ENCODE measurements at regions of chr7 and their contacts with region 1.

Region 1: GRCh38 chr7:44257618-44258422 is 57.0 kb downstream of the YKT6 start:
- DNase-seq: no peak
- H3K4me3 ChIP-seq: no peak overlapping the region
- H3K27ac ChIP-seq: no peak overlapping the region
- H3K4me1 ChIP-seq: no peaks in the 10 kb centered on the region
- H3K27me3 ChIP-seq: no peaks in the 10 kb centered on the region
- CTCF ChIP-seq: no peak
- EP300 ChIP-seq: no peak
- POLR2A ChIP-seq: no peak
- RAD21 ChIP-seq: no peak

Region 2: DNA sequence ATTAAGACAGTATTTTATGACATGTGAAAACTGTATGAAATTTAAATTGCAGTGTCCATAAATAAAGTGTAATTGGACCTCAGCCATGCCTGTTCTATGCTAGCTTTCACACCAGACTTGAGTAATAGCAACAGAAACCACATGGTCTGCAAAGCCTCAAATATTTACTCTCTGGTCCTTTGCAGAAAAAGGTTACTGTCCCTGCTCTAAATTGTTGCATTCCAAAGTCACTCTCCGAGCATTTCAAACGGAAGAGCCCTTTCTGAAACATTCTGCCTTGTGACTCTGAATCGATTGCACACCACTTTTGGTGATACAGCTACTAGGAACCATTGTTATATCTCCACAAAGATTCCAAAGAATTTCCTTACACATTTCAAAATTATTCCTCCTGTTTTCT is 756.0 kb before region 1 on chr7:
- CTCF ChIA-PET with region 1: no interaction called
- POLR2A ChIA-PET with region 1: no interaction called
- DNase-seq: no peak
- H3K4me3 ChIP-seq: no peak overlapping the region
- H3K27ac ChIP-seq: no peak overlapping the region
- H3K4me1 ChIP-seq: no peaks in the 10 kb centered on the region
- H3K27me3 ChIP-seq: no peaks in the 10 kb centered on the region
- CTCF ChIP-seq: no peak
- EP300 ChIP-seq: no peak
- POLR2A ChIP-seq: no peak
- RAD21 ChIP-seq: no peak

Region 3: GRCh38 chr7:44065436-44066118 is 192.2 kb before region 1 on chr7 and contains the start of gene PGAM2:
- CTCF ChIA-PET with region 1: no interaction called
- POLR2A ChIA-PET with region 1: no interaction called
- DNase-seq: peak in 1 of 2 experiments; percentile 65
- H3K4me3 ChIP-seq: peak within 1 kb of the TSS in 2 of 4 experiments; percentile 2 to 20; a peak in 1 of 8 replicates
- H3K27ac ChIP-seq: no peak within 1 kb of the TSS
- H3K4me1 ChIP-seq: peaks cover 9 to 30% (median 26%) of the 10 kb centered on the region in 4 experiments
- H3K27me3 ChIP-seq: peaks cover 0 to 3% (median 0%) of the 10 kb centered on the region in 4 experiments; a peak in 2 of 7 replicates
- CTCF ChIP-seq: no peak
- EP300 ChIP-seq: no peak
- POLR2A ChIP-seq: no peak
- RAD21 ChIP-seq: no peak
- total RNA-seq, gene PGAM2: 1.4 and 2.1 TPM in 2 replicates

Region 4: DNA sequence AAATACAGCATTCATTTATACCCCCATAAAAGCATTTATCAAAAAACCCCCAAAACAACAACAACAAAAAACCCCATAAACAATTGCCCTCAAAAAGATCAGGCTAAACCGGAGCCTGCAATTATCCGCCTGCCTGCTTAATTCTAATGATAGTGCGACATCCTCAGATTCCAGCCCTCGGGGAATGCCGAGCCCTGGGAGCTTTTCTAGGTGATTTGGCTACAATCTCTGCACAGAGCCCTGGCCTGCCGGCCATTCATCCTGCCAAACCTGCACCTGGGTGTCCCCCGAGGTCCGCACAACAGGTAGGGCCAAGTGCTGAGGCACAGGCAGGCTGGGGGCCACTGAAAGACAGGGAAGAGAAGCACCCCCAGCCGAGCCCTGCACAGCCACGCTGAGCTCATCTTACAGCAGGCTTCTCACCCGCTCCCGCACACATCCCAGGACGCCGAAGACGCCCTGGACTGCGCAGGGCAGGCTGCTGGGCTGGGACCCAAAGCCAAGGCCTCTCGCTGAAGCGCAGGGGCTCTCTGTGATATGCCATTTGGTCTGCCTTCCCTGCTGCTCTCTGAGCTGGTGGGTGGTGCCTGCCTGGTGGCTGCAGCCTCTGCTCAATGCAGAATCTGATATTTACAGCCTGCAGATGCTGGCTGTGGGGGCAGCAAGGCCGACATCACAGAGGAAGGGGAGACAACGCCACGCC is 10.1 kb after region 1 on chr7:
- CTCF ChIA-PET with region 1: interaction called, 15 read pairs
- POLR2A ChIA-PET with region 1: no interaction called
- DNase-seq: no peak
- H3K4me3 ChIP-seq: no peak overlapping the region
- H3K27ac ChIP-seq: no peak overlapping the region
- H3K4me1 ChIP-seq: peaks cover 0 to 6% (median 0%) of the 10 kb centered on the region in 4 experiments; a peak in 3 of 7 replicates
- H3K27me3 ChIP-seq: no peaks in the 10 kb centered on the region; a peak in 1 of 7 replicates
- CTCF ChIP-seq: no peak
- EP300 ChIP-seq: no peak
- POLR2A ChIP-seq: no peak
- RAD21 ChIP-seq: no peak

Region 5: DNA sequence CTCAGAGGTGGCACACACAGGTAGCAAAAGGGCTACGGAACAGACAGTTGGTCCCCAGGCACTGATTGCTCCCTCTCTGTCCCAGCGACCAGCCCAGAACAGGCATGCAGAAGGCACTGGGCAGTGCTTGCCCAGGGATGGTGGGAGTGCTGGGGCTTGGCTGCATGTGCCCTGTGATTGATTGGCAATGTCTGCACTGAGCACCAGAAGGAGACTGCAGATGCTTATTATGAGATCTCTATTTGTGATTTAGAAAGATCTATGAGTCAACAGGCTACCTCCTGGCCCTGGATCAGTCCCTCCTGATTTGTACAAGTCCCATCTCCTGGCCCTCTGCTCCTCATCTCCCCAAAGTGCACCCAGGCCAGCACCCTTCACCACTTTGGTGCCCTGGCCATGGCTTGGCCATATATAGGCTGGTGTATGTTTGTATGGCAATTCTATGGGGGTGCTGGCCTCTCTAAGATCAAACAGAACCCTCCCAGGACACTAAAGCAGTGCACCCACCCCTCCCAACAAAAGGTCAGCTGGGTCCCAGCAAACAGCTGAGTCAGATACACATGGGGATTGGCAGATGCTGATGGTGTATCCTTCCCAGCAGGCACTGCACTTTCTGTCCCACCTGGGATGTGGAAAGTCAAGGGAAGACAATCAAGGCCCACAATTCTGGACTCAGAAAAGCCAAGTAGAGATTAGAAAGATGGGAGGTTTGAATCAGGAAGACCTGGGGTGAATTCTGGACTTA is 36.7 kb after region 1 on chr7:
- CTCF ChIA-PET with region 1: no interaction called
- POLR2A ChIA-PET with region 1: no interaction called
- DNase-seq: no peak
- H3K4me3 ChIP-seq: no peak overlapping the region
- H3K27ac ChIP-seq: no peak overlapping the region
- H3K4me1 ChIP-seq: peaks cover 0 to 2% (median 0%) of the 10 kb centered on the region in 4 experiments; a peak in 2 of 7 replicates
- H3K27me3 ChIP-seq: no peaks in the 10 kb centered on the region; a peak in 1 of 7 replicates
- CTCF ChIP-seq: no peak
- EP300 ChIP-seq: no peak
- POLR2A ChIP-seq: no peak
- RAD21 ChIP-seq: no peak

Measured in H1 (cell line).